ENCODE measurements at regions of chr12 and their contacts with region 1.

Region 1: DNA sequence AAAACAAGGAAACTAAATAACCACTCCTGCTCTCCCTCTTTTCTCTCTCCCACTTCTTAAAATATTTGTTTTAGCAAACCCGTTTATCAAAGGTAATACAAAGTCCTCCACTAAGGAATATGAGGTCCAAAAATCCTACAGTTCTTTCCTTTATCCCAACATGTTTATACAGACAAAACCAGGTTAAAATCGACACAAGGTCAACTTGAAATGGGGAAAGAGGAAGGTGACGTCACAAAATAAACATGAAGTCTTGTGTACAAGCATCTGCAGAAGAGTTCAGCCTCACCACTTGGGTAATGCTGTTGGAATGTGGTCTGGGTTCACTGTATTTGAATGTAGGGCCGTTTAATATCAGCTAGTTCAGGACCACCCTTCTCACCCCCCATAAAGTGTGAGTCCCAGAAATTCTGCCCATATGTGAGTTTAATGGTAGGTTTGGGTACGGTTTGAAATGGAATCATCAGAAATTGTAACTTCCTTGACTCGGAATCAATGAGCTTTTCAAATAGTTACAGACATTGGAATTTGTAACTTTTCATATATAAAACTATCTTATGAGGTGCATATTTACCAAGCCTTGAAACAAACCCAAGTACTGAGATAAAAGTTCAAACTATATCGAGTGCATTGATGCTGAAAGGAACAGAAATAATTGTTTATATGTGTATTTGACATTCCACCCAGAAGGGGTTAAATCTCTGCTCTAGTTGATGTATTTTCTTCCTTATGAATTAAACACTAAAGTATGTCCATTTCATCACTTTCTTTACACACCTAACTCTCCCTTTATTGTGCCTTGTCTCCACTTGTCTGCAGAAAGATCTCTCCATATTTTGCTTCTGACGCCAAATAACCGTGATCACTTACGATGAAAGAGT is 120.1 kb upstream of the SLC38A2 start:
- DNase-seq: peak; percentile 88
- H3K4me3 Mint-ChIP-seq: peak overlapping the region; percentile 61
- H3K27ac Mint-ChIP-seq: peak overlapping the region; percentile 100
- H3K4me1 Mint-ChIP-seq: peaks cover 32% of the 10 kb centered on the region
- H3K27me3 Mint-ChIP-seq: no peaks in the 10 kb centered on the region
- CTCF ChIP-seq: no peak

Region 2: GRCh38 chr12:46153268-46153872 is 339.3 kb before region 1 on chr12:
- CTCF ChIA-PET with region 1: no interaction called
- POLR2A ChIA-PET with region 1: no interaction called
- intact Hi-C with region 1: loop called (anchors 5 kb)
- DNase-seq: peak; percentile 46
- H3K4me3 Mint-ChIP-seq: no peak overlapping the region
- H3K27ac Mint-ChIP-seq: no peak overlapping the region
- H3K4me1 Mint-ChIP-seq: peaks cover 5% of the 10 kb centered on the region
- H3K27me3 Mint-ChIP-seq: no peaks in the 10 kb centered on the region
- CTCF ChIP-seq: peak; percentile 77

Region 3: GRCh38 chr12:46382964-46383653 is 109.6 kb before region 1 on chr12:
- CTCF ChIA-PET with region 1: no interaction called
- POLR2A ChIA-PET with region 1: interaction called, 62 read pairs
- intact Hi-C with region 1: loop called (anchors 1 kb)
- DNase-seq: peak; percentile 97
- H3K4me3 Mint-ChIP-seq: peak overlapping the region; percentile 91
- H3K27ac Mint-ChIP-seq: peak overlapping the region; percentile 97
- H3K4me1 Mint-ChIP-seq: peaks cover 33% of the 10 kb centered on the region
- H3K27me3 Mint-ChIP-seq: no peaks in the 10 kb centered on the region
- CTCF ChIP-seq: no peak

Region 4: GRCh38 chr12:46442239-46442638 is 50.5 kb before region 1 on chr12:
- CTCF ChIA-PET with region 1: interaction called, 6 read pairs
- POLR2A ChIA-PET with region 1: interaction called, 43 read pairs
- intact Hi-C with region 1: no loop called
- DNase-seq: peak; percentile 54
- H3K4me3 Mint-ChIP-seq: peak overlapping the region; percentile 28
- H3K27ac Mint-ChIP-seq: peak overlapping the region; percentile 97
- H3K4me1 Mint-ChIP-seq: peaks cover 61% of the 10 kb centered on the region
- H3K27me3 Mint-ChIP-seq: no peaks in the 10 kb centered on the region
- CTCF ChIP-seq: no peak

Region 5: GRCh38 chr12:46546634-46547286 is 54.0 kb after region 1 on chr12:
- CTCF ChIA-PET with region 1: interaction called, 3 read pairs
- POLR2A ChIA-PET with region 1: interaction called, 33 read pairs
- intact Hi-C with region 1: loop called (anchors 2 kb)
- DNase-seq: no peak
- H3K4me3 Mint-ChIP-seq: no peak overlapping the region
- H3K27ac Mint-ChIP-seq: peak overlapping the region; percentile 98
- H3K4me1 Mint-ChIP-seq: peaks cover 55% of the 10 kb centered on the region
- H3K27me3 Mint-ChIP-seq: no peaks in the 10 kb centered on the region
- CTCF ChIP-seq: no peak

Region 6: GRCh38 chr12:46562625-46563228 is 70.0 kb after region 1 on chr12:
- CTCF ChIA-PET with region 1: no interaction called
- POLR2A ChIA-PET with region 1: interaction called, 21 read pairs
- intact Hi-C with region 1: no loop called
- DNase-seq: peak; percentile 95
- H3K4me3 Mint-ChIP-seq: peak overlapping the region; percentile 26
- H3K27ac Mint-ChIP-seq: peak overlapping the region; percentile 69
- H3K4me1 Mint-ChIP-seq: peaks cover 40% of the 10 kb centered on the region
- H3K27me3 Mint-ChIP-seq: no peaks in the 10 kb centered on the region
- CTCF ChIP-seq: no peak

Measured in MCF 10A (cell line).